Body of pancreas (tissue), 4 donors: ENCODE measurements at regions of chr14 and their contacts with region 1.

Region 1: DNA sequence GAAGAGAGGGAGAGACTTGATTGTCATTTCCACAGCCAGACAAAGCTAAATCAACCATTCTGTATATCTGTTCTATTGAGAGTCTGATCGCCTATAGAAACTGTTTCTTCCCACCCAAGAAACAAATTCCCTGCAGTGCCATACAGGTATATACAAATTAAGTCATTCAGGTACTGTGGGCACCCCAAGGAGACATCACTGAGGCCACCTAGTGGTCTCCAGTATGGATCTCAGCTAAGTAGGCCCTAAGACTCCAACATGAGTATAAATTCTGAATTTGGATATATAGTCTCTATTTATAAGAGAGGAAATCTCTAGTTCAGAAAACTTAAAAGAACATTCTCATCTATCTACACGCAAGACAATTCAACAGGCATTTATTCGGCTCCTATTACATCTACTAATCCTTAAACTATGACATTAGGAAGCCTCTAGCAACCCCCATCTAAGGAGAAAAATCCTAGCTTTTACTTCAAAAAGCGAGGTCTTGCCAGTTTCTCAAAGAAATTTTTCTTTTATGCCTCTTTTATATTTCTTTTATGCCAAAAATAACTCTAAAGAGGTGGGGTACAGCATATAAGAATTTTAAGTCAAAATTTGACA is 62.6 kb downstream of the DCAF5 start:
- DNase-seq: peak; percentile 35 to 54 (median 46)
- ATAC-seq: peak; percentile 61
- H3K4me3 ChIP-seq: no peak overlapping the region
- H3K27ac ChIP-seq: no peak overlapping the region
- H3K4me1 ChIP-seq: peaks cover 27% of the 10 kb centered on the region
- H3K27me3 ChIP-seq: no peaks in the 10 kb centered on the region
- CTCF ChIP-seq: peak; percentile 14 to 59 (median 56)
- POLR2A ChIP-seq: no peak

Region 2: GRCh38 chr14:68862954-68863594 is 227.2 kb before region 1 on chr14:
- intact Hi-C with region 1: loop called (anchors 10 kb)
- DNase-seq: peak; percentile 78 to 87 (median 84)
- ATAC-seq: peak; percentile 77
- H3K4me3 ChIP-seq: no peak overlapping the region
- H3K27ac ChIP-seq: no peak overlapping the region
- H3K4me1 ChIP-seq: no peaks in the 10 kb centered on the region
- H3K27me3 ChIP-seq: no peaks in the 10 kb centered on the region
- CTCF ChIP-seq: peak; percentile 49 to 81 (median 73)
- POLR2A ChIP-seq: no peak

Region 3: DNA sequence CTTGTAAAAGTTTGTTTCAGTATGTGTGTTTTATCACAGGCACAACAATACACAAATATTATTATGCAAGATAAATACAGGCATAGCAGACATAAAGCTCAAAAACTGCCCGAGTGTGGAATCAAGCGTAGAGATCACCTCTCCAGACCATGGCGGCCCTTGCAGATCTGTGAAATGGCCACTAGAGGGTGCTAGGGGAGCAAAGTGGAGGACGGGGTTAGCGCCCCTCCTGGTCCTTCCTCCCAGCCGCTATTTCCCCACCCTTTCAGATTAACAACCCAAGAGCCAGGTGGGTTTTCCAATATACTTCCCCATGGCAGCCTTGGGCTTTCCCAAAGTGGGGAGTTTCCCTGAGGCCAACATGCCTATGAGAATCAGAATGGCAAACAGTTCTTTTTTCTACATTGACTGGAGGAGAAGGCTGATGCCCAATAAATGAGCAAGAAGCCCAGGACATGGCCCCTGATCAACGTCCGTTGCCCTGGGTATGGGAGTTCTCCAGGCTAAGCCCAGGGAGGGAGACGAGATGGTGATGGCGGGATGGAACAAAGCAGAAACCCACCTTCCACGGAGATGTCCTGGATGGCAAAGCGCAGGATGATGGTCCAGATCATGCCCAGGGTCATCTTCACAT is 178.6 kb before region 1 on chr14:
- intact Hi-C with region 1: loop called (anchors 5 kb)
- DNase-seq: peak; percentile 76 to 78 (median 77)
- ATAC-seq: peak; percentile 88
- H3K4me3 ChIP-seq: no peak overlapping the region
- H3K27ac ChIP-seq: peak overlapping the region in 1 of 4 donors; percentile 3
- H3K4me1 ChIP-seq: no peaks in the 10 kb centered on the region
- H3K27me3 ChIP-seq: no peaks in the 10 kb centered on the region
- CTCF ChIP-seq: peak; percentile 79 to 98 (median 97)
- POLR2A ChIP-seq: no peak

Region 4: DNA sequence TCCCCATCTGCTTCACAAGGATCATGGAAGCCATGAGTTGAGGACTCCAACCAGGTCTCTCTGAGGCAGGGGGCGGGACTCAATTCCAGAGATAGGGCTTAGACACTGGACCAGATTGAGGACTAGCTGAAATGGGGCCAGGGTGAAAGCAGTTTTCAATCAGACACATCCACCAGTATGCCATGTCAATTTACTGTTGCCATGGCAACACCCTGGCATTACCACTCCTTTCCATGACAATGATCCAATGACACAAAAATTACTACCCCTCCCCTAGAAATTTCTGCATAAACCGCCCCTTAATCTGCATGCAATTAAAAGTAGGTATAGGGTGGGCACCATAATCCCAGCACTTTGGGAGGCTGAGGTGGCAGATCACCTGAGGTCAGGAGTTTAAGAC is 81.3 kb after region 1 on chr14:
- intact Hi-C with region 1: no loop called
- DNase-seq: no peak
- ATAC-seq: no peak
- H3K4me3 ChIP-seq: no peak overlapping the region
- H3K27ac ChIP-seq: no peak overlapping the region
- H3K4me1 ChIP-seq: no peaks in the 10 kb centered on the region
- H3K27me3 ChIP-seq: no peaks in the 10 kb centered on the region
- CTCF ChIP-seq: no peak
- POLR2A ChIP-seq: no peak